ENCODE measurements at regions of chrX and their contacts with region 1.

Region 1: GRCh38 chrX:46376246-46376885 is 168.9 kb downstream of the ZNF674 start:
- DNase-seq: peak; percentile 88
- H3K4me3 ChIP-seq: no peak overlapping the region
- H3K27ac ChIP-seq: peak overlapping the region; percentile 31
- H3K4me1 ChIP-seq: peaks cover 26% of the 10 kb centered on the region
- H3K27me3 ChIP-seq: no peaks in the 10 kb centered on the region
- CTCF ChIP-seq: peak; percentile 74

Region 2: DNA sequence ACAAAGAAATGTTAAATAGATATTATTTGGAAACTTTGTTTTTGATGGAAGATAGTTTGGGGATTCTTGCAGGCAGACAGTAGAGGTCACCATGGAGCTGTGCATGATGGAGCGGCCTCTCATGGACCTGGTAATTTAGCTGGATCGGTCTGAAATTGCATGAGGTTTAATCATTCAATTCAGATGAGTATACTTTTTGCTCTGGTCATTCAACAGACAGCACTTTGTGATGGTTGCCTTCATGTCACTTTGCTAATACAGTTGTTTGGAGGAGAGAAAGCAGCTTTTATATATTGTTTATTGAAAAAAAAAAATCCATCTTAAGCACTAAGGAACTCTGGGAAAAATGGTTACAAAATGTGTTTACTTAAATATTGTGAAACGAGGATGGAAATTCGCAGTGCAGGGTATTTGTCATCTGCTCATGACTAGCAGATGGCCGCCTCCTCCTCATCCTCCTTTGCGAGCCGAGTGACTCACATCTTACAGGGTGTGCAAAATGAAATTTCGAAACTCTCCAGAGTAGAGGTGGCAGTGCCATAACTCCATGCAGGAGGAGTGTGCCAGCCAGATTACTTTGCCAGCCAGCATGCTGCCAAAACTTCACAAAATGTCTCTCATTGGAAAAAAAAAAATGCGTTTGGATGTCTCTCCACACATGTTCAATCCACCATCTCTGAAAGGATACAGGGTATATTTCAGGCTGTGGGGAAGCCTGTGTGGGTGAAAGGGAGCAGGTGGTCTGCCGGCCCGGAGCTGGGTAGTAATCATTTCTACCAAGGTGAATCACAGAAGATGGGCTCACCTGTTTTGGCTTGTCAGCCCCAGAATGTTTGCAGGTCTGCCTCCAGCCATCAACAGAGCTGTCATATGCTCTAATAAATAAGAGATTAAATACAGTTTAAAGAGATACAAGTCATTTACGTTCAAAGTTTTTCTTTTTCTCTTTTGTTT is 860.8 kb before region 1 on chrX:
- CTCF ChIA-PET with region 1: interaction called, 11 read pairs
- POLR2A ChIA-PET with region 1: no interaction called
- intact Hi-C with region 1: loop called (anchors 2 kb)
- DNase-seq: peak; percentile 72
- H3K4me3 ChIP-seq: no peak overlapping the region
- H3K27ac ChIP-seq: peak overlapping the region; percentile 4
- H3K4me1 ChIP-seq: peaks cover 21% of the 10 kb centered on the region
- H3K27me3 ChIP-seq: no peaks in the 10 kb centered on the region
- CTCF ChIP-seq: peak; percentile 80

Region 3: DNA sequence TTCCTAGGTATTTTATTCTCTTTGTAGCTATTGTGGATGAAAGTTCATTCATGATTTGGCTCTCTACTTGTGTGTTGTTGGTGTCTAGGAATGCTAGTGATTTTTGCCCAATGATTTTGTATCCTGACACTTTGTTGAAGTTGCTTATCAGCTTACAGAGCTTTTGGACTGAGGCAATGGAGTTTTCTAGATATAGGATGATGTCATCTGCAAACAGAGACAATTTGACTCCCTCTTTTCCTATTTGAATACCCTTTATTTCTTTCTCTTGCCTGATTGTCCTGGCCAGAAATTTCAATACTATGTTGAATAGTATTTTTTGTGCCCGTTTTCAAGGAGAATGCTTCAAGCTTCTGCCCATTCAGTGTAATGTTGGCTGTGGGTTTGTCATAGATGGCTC is 274.0 kb before region 1 on chrX:
- CTCF ChIA-PET with region 1: no interaction called
- POLR2A ChIA-PET with region 1: no interaction called
- intact Hi-C with region 1: no loop called
- DNase-seq: no peak
- H3K4me3 ChIP-seq: no peak overlapping the region
- H3K27ac ChIP-seq: no peak overlapping the region
- H3K4me1 ChIP-seq: no peaks in the 10 kb centered on the region
- H3K27me3 ChIP-seq: no peaks in the 10 kb centered on the region
- CTCF ChIP-seq: no peak

Region 4: DNA sequence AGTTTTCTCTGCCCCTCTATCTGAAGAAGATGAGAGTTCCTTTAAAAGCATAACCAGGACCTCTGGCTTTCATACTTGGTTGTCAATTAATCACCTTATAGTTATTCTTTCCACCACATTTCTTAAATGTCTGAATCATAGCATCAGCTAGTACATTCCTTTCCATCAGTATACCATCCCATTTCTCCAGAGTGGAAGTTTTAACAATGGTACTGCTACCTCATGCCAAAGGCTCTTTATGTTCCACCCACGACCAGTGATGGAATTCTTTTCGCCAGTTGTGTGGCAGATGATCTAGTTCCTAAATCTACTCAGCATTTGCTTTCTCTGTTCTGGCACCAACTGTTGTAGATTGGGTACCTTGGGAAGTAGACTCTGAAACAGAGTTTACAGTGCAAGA is 211.0 kb before region 1 on chrX:
- CTCF ChIA-PET with region 1: no interaction called
- POLR2A ChIA-PET with region 1: no interaction called
- intact Hi-C with region 1: no loop called
- DNase-seq: no peak
- H3K4me3 ChIP-seq: no peak overlapping the region
- H3K27ac ChIP-seq: no peak overlapping the region
- H3K4me1 ChIP-seq: no peaks in the 10 kb centered on the region
- H3K27me3 ChIP-seq: no peaks in the 10 kb centered on the region
- CTCF ChIP-seq: no peak

Region 5: DNA sequence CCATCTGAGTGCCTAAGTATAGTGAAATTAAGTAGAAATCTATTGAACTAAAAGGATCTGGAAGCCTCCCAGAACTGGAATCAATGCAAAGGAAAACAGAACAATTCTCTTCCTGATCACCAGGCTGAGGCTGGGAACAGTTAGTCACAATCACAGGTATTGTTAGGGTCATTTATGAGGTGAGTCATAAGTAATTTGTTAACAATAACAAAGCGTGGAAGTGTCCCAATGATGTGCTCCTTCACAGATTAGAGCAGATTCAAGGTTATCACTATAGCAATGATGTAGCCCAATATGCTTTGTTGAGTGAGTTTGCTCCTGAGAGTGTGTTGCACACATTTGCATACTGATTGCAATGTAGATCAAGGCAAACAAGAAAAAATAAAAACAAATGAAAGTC is 59.2 kb before region 1 on chrX:
- CTCF ChIA-PET with region 1: interaction called, 4 read pairs
- POLR2A ChIA-PET with region 1: interaction called, 3 read pairs
- intact Hi-C with region 1: loop called (anchors 2 kb)
- DNase-seq: peak; percentile 36
- H3K4me3 ChIP-seq: no peak overlapping the region
- H3K27ac ChIP-seq: peak overlapping the region; percentile 92
- H3K4me1 ChIP-seq: peaks cover 51% of the 10 kb centered on the region
- H3K27me3 ChIP-seq: no peaks in the 10 kb centered on the region
- CTCF ChIP-seq: no peak

Region 6: GRCh38 chrX:46324166-46324565 is 52.2 kb before region 1 on chrX:
- CTCF ChIA-PET with region 1: interaction called, 5 read pairs
- POLR2A ChIA-PET with region 1: interaction called, 3 read pairs
- intact Hi-C with region 1: loop called (anchors 1 kb)
- DNase-seq: no peak
- H3K4me3 ChIP-seq: no peak overlapping the region
- H3K27ac ChIP-seq: peak overlapping the region; percentile 96
- H3K4me1 ChIP-seq: peaks cover 77% of the 10 kb centered on the region
- H3K27me3 ChIP-seq: no peaks in the 10 kb centered on the region
- CTCF ChIP-seq: no peak